ENCODE measurements at regions of chr1 and their contacts with region 1.

Region 1: DNA sequence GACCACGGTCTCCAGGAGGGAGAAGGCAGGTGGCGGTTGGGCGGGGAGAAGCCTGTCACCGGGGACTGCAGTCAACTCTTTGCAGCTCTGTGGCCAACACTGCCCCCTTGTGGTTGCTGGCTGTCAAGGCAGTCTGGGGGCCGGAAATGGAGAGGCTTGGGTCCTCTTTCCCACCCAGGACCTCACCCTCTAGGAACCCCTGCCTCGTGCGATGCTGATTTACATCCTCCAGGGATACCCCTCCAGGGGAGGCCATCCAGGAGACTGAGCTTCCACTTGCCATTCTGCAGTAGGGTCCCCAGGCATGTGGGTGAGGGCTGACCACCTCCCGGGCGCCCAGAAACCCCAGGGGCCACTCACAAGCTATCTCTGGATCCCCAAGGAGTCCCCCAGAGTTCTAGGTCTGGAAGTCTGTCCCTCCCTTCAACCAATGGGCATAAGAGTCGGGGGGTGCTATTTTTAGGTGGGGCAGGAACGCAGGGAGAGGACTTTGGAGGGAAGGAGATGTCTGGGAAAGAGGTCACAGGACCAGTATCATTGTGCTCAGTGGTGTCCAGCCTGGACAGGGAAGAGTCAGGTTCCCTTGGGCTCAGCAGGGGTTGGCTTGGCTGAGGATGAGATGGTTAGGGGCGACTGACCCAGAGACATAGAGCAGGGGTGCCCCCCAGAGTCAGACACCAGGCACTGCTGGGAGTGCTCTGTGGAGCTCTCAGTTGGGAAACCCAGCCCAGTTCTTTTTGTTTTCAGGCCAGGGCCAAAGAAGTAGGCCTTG is 7.1 kb upstream of the GPR61 start:
- DNase-seq: peak; percentile 93
- ATAC-seq: peak; percentile 93
- H3K4me3 Mint-ChIP-seq: peak overlapping the region; percentile 57
- H3K27ac Mint-ChIP-seq: peak overlapping the region; percentile 90
- H3K4me1 Mint-ChIP-seq: peaks cover 23% of the 10 kb centered on the region
- H3K27me3 Mint-ChIP-seq: no peaks in the 10 kb centered on the region
- CTCF ChIP-seq: peak; percentile 79

Region 2: DNA sequence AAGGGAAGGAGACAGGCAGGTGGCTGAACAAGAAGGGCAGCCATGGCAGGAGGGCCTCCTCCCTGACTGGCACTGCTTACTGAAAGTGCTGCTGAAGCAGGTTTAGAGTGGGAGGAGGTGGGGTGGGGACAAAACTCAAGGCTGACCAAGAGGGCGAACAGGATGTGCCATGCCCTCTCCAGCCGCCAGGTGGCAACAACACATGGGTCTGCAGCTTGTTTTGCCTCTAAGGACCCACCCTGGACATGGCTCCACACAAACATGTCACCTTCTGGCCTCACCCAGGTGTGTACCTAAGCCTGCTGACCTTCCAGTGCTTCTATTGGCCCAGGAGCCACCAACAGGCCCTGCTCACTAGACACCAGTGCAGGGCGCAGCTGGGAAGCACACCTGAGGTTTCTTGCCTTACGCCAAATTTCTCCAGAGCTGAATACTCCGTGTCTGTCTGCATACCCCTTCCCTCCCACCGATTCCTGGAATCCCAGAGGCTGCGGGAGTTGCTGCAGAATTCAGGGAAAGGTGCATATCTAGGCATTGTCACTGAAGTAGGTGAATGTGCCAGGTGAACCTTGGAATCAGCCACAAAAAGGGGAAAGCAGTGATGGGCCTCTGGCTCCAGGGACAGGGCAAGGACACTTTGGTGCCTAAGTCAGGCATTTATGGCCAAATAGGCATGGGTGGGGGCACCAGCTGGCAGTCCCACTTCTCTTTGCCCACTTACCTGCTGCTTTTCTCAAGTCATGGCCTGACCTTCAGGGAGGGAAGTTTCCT is 254.9 kb before region 1 on chr1:
- CTCF ChIA-PET with region 1: interaction called, 36 read pairs
- POLR2A ChIA-PET with region 1: no interaction called
- intact Hi-C with region 1: loop called (anchors 5 kb)
- DNase-seq: peak; percentile 86
- ATAC-seq: peak; percentile 97
- H3K4me3 Mint-ChIP-seq: no peak overlapping the region
- H3K27ac Mint-ChIP-seq: no peak overlapping the region
- H3K4me1 Mint-ChIP-seq: peaks cover 6% of the 10 kb centered on the region
- H3K27me3 Mint-ChIP-seq: no peaks in the 10 kb centered on the region
- CTCF ChIP-seq: peak; percentile 88

Region 3: DNA sequence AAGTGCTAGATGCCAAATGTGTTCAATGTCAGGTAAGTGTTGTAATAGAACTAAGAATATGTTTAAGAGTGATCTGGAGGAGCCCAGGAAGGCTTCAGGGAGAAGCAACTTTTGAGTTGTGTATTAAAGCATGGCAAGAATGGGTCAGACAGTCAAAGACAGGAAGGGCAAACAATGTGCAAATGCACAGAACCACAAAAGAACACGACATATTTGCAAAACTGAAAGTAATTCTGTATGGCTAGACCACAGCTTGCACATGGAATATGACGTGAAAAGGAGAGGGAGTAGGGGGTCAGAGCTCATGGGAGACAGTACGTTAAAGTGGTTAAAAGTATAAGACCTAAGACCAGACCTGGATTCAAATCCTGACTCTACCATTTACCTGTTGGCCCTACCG is 127.7 kb before region 1 on chr1:
- CTCF ChIA-PET with region 1: interaction called, 59 read pairs
- POLR2A ChIA-PET with region 1: no interaction called
- intact Hi-C with region 1: no loop called
- DNase-seq: peak; percentile 11
- ATAC-seq: peak; percentile 76
- H3K4me3 Mint-ChIP-seq: no peak overlapping the region
- H3K27ac Mint-ChIP-seq: peak overlapping the region; percentile 81
- H3K4me1 Mint-ChIP-seq: peaks cover 23% of the 10 kb centered on the region
- H3K27me3 Mint-ChIP-seq: no peaks in the 10 kb centered on the region
- CTCF ChIP-seq: no peak

Region 4: DNA sequence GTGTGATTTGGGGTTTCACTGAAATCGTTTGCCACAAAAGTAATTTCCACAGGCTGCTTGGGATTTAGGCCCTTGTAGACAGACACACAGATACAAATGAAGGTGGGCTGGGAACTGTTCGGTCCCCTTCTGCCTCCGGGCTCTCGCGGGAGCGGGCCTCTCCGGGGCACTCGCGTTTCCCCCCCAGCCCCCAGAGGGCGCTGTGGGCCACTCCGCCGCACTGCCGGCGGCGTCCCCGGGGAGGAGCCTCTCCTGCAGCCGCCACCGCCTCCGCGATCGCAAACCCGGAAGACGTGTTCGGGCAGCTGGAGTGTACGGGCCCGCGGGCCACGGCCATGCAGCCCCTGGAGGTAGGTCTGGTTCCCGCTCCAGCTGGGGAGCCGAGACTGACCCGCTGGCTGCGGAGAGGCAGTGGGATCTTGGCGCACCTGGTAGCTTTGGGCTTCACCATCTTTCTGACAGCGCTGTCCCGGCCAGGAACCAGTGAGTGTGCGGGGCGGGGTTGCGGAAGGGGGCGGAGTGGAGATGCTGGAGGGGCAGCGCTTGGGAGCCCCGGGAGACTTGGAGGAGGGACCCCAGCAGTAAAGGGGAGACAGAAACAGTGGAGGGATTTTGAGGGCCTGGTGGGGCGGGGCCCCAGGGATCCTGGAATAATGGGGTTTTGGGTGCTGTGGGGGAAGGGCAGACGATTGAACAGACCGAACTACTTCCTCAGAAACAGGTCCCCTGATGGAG is 38.6 kb before region 1 on chr1 and contains the start of gene CYB561D1:
- CTCF ChIA-PET with region 1: interaction called, 1,390 read pairs
- POLR2A ChIA-PET with region 1: interaction called, 24 read pairs
- intact Hi-C with region 1: loop called (anchors 1 kb)
- DNase-seq: peak; percentile 89
- ATAC-seq: peak; percentile 91
- H3K4me3 Mint-ChIP-seq: peak within 1 kb of the TSS; percentile 93
- H3K27ac Mint-ChIP-seq: peak within 1 kb of the TSS; percentile 73
- H3K4me1 Mint-ChIP-seq: peaks cover 45% of the 10 kb centered on the region
- H3K27me3 Mint-ChIP-seq: no peaks in the 10 kb centered on the region
- CTCF ChIP-seq: peak; percentile 88
- total RNA-seq, gene CYB561D1: 7.0 to 9.5 TPM

Region 5: GRCh38 chr1:109516872-109517271 is 15.7 kb before region 1 on chr1:
- CTCF ChIA-PET with region 1: interaction called, 1,390 read pairs
- POLR2A ChIA-PET with region 1: interaction called, 6 read pairs
- intact Hi-C with region 1: no loop called
- DNase-seq: no peak
- ATAC-seq: no peak
- H3K4me3 Mint-ChIP-seq: no peak overlapping the region
- H3K27ac Mint-ChIP-seq: no peak overlapping the region
- H3K4me1 Mint-ChIP-seq: peaks cover 2% of the 10 kb centered on the region
- H3K27me3 Mint-ChIP-seq: no peaks in the 10 kb centered on the region
- CTCF ChIP-seq: no peak

Measured in activated CD8-positive, alpha-beta T cell treated with anti-CD3 and anti-CD28 coated beads for 36 hours (primary cell).